Left ventricle myocardium superior (tissue), 1 donor: ENCODE measurements at regions of chr10 and their contacts with region 1.

Region 1: GRCh38 chr10:70461215-70461986 is 17.2 kb upstream of the PALD1 start:
- DNase-seq: peak; percentile 71
- ATAC-seq: peak; percentile 56

Region 2: DNA sequence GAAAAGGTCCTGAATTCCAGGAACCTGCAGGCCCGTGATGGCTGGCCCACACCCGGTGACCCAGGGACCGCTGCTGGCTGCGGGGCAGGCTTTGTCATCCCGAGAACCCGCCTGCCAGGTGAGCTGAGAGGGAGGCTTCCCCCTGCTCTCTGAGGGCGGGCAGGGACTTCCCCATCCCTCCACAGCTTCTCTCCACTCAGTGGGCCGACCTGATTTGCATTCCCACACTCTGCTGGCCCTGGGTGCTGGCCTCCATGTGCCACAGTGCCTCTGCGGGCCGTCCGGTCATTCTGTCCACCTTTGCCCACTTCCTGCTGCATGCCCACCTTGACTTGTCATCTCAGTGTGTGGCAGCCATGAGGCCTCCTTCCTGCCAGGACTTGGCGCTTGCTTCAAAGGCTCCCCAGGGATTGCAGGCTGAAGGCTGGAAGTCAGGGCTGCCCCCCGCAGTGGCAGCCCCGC is 52.5 kb after region 1 on chr10:
- intact Hi-C with region 1: loop called (anchors 10 kb)
- DNase-seq: no peak
- ATAC-seq: no peak

Region 3: GRCh38 chr10:70540089-70540788 is 78.8 kb after region 1 on chr10:
- intact Hi-C with region 1: loop called (anchors 5 kb)
- DNase-seq: peak; percentile 65
- ATAC-seq: peak; percentile 58

Region 4: GRCh38 chr10:70722820-70723424 is 261.5 kb after region 1 on chr10:
- intact Hi-C with region 1: no loop called
- DNase-seq: no peak
- ATAC-seq: no peak

Region 5: GRCh38 chr10:70758757-70759514 is 297.5 kb after region 1 on chr10:
- intact Hi-C with region 1: loop called (anchors 10 kb)
- DNase-seq: peak; percentile 57
- ATAC-seq: peak; percentile 70